ENCODE measurements at regions of chr10 and their contacts with region 1.

Region 1: GRCh38 chr10:102352066-102352715 is 43.3 kb upstream of the NFKB2 start:
- ATAC-seq: peak in 6 of 8 experiments; percentile 31 to 93 (median 64)
- H3K4me3 ChIP-seq: no peak overlapping the region
- H3K27ac ChIP-seq: no peak overlapping the region
- H3K4me1 ChIP-seq: no peaks in the 10 kb centered on the region

Region 2: DNA sequence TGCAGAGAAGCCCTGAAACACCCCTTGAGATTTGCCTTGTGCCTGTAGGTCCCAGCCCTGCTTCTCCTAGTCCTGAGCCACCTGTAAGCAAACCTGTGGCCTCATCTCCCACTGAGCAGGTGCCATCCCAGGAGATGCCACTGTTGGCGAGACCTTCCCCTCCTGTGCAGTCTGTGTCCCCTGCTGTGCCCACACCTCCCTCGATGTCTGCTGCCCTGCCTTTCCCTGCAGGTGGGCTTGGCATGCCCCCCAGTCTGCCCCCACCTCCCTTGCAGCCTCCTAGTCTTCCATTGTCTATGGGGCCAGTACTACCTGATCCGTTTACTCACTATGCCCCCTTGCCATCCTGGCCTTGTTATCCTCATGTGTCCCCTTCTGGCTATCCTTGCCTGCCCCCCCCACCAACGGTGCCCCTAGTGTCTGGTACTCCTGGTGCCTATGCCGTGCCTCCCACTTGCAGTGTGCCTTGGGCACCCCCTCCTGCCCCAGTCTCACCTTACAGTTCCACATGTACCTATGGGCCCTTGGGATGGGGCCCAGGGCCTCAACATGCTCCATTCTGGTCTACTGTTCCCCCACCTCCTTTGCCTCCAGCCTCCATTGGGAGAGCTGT is 211.2 kb before region 1 on chr10:
- in situ Hi-C with region 1: no loop called
- ATAC-seq: peak in 4 of 8 experiments; percentile 3 to 8 (median 4)
- H3K4me3 ChIP-seq: no peak overlapping the region
- H3K27ac ChIP-seq: no peak overlapping the region
- H3K4me1 ChIP-seq: no peaks in the 10 kb centered on the region

Region 3: GRCh38 chr10:102229810-102230263 is 122.4 kb before region 1 on chr10:
- in situ Hi-C with region 1: loop called in 5 of 9 experiments (anchors 10 to 25 kb)
- ATAC-seq: peak; percentile 25 to 57 (median 48)
- H3K4me3 ChIP-seq: peak overlapping the region in 3 of 5 donors; percentile 17 to 32 (median 20)
- H3K27ac ChIP-seq: no peak overlapping the region
- H3K4me1 ChIP-seq: peaks cover 2 to 12% of the 10 kb centered on the region in 2 donors

Region 4: DNA sequence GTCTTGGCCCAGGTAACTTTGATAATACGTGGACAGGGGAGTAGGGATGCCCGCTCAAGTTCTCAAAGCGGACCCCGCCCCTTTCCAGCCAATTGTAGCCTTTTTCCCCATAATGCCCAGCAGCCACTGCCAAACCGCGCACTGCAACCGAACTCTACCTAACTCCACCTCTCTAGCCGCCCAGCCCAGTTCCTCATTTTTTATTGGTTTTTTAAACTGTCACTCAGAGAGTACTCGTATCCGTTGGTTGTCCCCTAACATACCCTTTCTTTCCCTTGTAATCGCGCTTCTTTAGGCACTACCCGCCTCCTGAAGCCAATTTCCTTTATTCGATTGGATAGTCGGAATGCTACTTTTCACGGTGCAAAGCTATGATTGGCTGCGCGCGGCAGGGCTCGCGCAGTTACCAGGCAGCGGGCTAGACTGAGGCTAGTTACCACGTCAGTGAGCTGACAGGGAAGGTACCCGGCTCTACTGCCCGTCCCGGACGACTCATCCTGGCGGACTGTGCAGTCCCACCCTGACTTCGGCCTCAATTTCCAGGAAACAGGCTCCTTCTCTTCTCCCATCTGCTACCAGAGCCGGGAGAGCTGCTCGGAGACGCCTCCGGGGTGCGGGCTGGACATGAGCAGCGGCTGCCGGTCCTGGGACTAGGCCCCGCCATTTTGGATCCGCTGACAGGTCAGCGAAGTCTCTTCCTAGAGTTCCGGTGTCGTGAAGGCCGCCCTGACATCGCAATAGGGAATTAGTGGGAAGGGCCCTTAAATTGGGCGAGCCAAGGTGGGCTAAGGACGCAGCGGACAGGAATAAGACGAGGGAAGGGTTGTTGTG is 106.9 kb before region 1 on chr10 and contains the start of gene GBF1:
- in situ Hi-C with region 1: loop called in 5 of 9 experiments (anchors 25 kb)
- ATAC-seq: peak; percentile 85 to 92 (median 89)
- H3K4me3 ChIP-seq: peak within 1 kb of the TSS; percentile 65 to 93 (median 85)
- H3K27ac ChIP-seq: peak within 1 kb of the TSS; percentile 96 to 97
- H3K4me1 ChIP-seq: peaks cover 19 to 27% of the 10 kb centered on the region in 2 donors
- total RNA-seq, gene GBF1: 28.4 to 47.8 (median 39.1) TPM

Region 5: GRCh38 chr10:102268375-102268888 is 83.8 kb before region 1 on chr10:
- in situ Hi-C with region 1: loop called in 1 of 9 experiments (anchors 25 kb)
- ATAC-seq: no peak
- H3K4me3 ChIP-seq: no peak overlapping the region
- H3K27ac ChIP-seq: no peak overlapping the region
- H3K4me1 ChIP-seq: no peaks in the 10 kb centered on the region

Region 6: GRCh38 chr10:102710610-102711009 is 358.4 kb after region 1 on chr10:
- in situ Hi-C with region 1: no loop called
- ATAC-seq: no peak
- H3K4me3 ChIP-seq: no peak overlapping the region
- H3K27ac ChIP-seq: no peak overlapping the region
- H3K4me1 ChIP-seq: peaks cover 8 to 11% of the 10 kb centered on the region in 2 donors

Measured in motor neuron (in vitro differentiated cells).